ENCODE measurements at regions of chr3 and their contacts with region 1.

Region 1: DNA sequence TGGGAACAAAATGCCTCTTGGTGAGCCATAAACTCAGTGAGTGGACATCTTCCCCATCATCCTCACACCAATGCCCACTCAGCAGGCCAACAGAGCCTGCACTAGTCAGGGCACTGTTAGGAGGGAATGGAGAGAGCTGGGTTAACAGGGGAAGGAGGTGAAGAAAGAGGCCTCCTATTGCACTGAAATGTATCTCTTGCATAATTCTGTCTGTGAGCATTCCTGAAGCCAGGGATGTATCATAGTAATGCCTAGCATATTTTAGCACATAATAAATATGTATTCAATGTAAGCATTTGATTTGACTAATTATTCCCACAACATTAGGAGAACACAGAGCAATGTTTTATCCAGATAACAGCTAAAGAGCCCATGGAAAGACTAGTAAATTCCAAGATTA is 81.2 kb downstream of the ANO10 start:
- DNase-seq: no peak
- ATAC-seq: no peak
- H3K4me3 ChIP-seq: no peak overlapping the region
- H3K27ac ChIP-seq: no peak overlapping the region
- H3K4me1 ChIP-seq: no peaks in the 10 kb centered on the region
- H3K27me3 ChIP-seq: no peaks in the 10 kb centered on the region
- CTCF ChIP-seq: no peak
- POLR2A ChIP-seq: no peak

Region 2: GRCh38 chr3:43442872-43443395 is 97.7 kb before region 1 on chr3:
- intact Hi-C with region 1: no loop called
- DNase-seq: no peak
- ATAC-seq: no peak
- H3K4me3 ChIP-seq: no peak overlapping the region
- H3K27ac ChIP-seq: no peak overlapping the region
- H3K4me1 ChIP-seq: no peaks in the 10 kb centered on the region
- H3K27me3 ChIP-seq: no peaks in the 10 kb centered on the region
- CTCF ChIP-seq: no peak
- POLR2A ChIP-seq: no peak

Region 3: DNA sequence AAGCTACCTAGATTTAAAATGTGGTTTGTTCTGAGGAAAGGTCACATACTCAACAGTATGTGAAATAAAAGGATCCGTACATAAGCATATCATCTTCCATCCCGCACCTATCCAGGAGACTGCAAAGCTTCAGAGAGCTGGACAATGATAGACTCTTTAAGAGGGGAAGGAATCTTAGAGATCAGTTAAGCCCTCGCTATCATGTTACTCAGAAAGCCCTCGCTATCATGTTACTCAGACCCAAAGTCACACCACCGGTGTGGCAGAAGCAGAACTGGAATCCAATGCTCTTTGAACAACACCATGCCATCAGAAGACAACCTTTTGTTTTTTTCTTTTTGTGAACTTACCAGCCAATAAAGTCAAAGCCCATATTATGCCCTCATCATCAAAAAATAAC is 75.4 kb after region 1 on chr3:
- intact Hi-C with region 1: no loop called
- DNase-seq: no peak
- ATAC-seq: no peak
- H3K4me3 ChIP-seq: no peak overlapping the region
- H3K27ac ChIP-seq: no peak overlapping the region
- H3K4me1 ChIP-seq: peaks cover 0 to 10% (median 6%) of the 10 kb centered on the region in 12 donors
- H3K27me3 ChIP-seq: no peaks in the 10 kb centered on the region
- CTCF ChIP-seq: no peak
- POLR2A ChIP-seq: no peak

Region 4: DNA sequence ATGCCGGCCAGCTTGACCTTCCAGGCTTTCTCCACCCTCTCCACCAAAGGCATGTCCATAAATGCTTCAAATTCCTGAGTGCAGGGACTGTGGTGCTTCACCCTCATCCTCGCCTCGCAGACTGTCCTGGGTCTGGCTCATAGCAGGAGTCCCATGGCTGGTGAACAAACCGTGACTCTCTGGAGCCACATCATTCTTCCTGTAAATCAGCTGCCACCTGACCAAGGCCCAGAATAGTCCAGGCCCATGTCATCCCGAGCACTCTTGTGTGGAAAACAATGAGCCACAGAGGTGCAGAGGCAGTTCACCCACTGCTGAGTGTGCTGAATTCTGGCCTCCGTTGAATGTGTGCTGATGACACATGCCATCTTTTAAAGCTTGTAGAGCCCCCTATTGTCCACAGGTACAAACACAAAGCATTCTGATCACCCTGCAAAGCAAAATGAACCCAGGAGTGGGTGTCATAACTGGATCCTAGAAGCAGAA is 218.7 kb after region 1 on chr3:
- intact Hi-C with region 1: loop called in 3 of 10 experiments (anchors 10 kb)
- DNase-seq: peak in 3 of 5 donors; percentile 38 to 60 (median 42)
- ATAC-seq: peak; percentile 72 to 92 (median 91)
- H3K4me3 ChIP-seq: no peak overlapping the region
- H3K27ac ChIP-seq: peak overlapping the region in 11 of 12 donors; percentile 30 to 78 (median 57)
- H3K4me1 ChIP-seq: peaks cover 0 to 20% (median 14%) of the 10 kb centered on the region in 12 donors
- H3K27me3 ChIP-seq: no peaks in the 10 kb centered on the region
- CTCF ChIP-seq: peak in 2 of 12 donors; percentile 20 to 29
- POLR2A ChIP-seq: peak in 1 of 2 donors; percentile 22

Region 5: DNA sequence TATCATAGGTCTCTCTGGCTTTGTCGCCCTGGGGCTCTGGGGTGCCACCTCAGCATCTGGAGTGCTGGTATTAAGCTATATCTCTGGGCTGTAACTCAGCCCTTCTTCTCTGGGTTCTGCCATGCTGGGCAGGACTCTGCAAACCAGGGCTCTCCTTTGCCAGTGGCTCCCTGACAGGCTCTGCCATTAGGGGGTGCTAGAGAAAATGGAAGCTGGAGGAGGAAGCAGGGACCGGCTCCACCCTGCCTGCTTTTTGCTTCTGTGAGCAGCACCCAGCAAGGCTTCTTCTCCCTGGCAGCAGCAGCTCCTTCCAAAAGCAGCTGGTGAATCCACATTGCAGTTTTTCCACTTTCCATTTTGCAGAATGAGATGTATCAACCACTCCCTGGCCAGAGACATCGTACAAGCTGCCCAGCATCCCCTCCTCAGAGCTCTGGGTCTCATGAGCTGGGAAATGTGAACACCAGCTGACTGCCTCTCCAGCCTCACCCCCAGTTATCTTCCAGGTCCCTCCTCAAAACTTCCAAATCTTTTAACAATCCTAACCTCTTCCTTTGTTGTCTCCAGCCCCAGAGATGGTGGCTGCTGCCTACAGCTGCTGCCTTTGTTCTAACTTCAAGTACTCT is 315.2 kb after region 1 on chr3:
- intact Hi-C with region 1: loop called in 1 of 10 experiments (anchors 10 kb)
- DNase-seq: peak in 4 of 5 donors; percentile 30 to 58 (median 43)
- ATAC-seq: peak; percentile 75 to 87 (median 82)
- H3K4me3 ChIP-seq: no peak overlapping the region
- H3K27ac ChIP-seq: no peak overlapping the region
- H3K4me1 ChIP-seq: no peaks in the 10 kb centered on the region
- H3K27me3 ChIP-seq: peaks cover 0 to 51% (median 15%) of the 10 kb centered on the region in 9 donors
- CTCF ChIP-seq: peak; percentile 37 to 67 (median 54)
- POLR2A ChIP-seq: no peak

Region 6: DNA sequence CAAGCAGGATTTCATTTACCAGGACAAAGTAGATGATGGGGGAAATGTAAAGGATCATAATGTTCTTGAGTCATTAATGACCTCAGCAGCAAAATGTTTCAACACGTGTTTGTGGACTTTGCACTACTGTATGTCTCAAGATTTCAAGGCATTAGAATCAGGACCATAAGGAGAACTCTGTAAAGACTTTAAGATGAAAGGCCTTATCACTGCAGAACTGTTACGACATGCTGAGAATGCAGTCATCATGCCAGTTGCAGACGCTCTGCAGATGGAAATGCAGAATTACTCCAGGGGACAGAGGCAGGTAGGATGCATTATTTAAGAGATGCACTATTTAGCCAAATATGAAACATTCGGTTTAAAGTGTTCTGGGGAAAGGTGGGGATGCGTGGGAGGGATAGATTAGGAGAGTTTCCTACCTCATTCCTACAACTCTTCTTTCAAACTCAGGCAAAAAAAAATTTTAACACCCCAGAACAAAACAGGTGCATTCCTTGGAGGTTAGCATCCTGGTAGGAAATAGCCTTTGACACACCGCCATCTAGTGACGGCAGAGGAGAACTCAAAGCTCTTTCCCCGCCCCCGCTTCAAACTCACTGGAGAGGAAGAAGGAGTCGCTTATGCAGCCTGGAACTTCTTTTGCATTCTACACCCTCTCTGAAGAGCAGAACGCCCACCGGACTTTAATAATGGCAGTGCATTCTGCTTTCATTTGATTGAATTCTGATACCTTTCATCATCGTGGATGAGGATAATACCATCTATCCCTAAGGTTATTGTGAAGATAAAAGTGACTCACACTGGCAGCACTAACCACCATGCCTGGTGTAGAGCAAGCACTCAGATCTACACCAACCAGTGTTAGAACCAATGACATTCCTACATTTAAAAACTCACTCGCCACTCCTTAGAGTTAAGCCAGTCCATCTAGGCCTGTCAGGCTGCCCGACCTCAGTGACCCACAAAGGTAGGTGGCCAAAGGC is 658.0 kb after region 1 on chr3:
- intact Hi-C with region 1: loop called (anchors 1 to 10 kb)
- DNase-seq: peak in 4 of 5 donors; percentile 45 to 67 (median 58)
- ATAC-seq: peak in 3 of 4 donors; percentile 78 to 85 (median 85)
- H3K4me3 ChIP-seq: no peak overlapping the region
- H3K27ac ChIP-seq: no peak overlapping the region
- H3K4me1 ChIP-seq: no peaks in the 10 kb centered on the region
- H3K27me3 ChIP-seq: peaks cover 0 to 29% (median 0%) of the 10 kb centered on the region in 9 donors
- CTCF ChIP-seq: peak; percentile 69 to 86 (median 80)
- POLR2A ChIP-seq: no peak